Heart left ventricle (tissue), 16 donors: ENCODE measurements at regions of chr5 and their contacts with region 1.

Region 1: DNA sequence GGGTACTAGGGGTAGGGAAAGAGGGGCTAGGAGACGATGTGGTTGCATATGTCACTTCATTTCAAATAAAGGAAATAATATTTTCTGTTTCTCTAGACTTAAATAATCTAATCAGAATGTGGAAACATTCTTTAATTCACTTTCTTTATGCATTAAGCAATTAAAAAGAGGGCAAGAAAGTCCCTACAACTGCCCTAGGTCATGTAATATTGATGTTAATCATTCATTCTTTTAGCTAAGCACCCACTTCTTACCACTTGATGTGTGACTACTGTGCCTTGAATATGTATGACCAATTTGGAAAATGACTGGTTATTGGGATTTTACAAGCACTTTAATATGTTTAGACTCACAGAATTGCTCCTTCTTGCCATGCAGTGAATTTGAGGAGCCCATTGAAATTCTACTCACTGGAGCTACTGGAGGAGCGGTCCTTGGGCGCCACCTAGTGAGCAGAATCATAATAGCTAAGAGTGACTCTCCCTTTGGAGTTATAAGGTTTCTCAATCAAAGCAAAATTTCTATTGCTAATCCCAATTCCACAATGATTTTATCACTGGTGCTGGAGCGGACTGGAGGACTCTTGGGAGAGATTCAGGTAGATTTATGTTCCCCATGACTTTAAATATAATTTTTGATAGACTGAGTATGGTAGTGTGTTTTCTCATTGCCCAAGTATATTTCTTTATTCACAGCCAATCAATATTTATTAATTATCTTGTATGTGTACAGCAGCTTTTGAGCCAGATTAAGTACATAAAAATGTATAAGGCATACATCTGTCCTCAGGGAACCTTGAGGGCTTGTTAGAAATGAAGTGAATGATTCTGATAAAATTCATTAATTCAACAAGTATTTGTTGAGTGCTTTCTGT is 225.1 kb downstream of the ADGRV1 start:
- DNase-seq: peak in 4 of 5 donors; percentile 34 to 61 (median 54)
- ATAC-seq: peak in 3 of 4 donors; percentile 64 to 74 (median 65)
- H3K4me3 ChIP-seq: no peak overlapping the region
- H3K27ac ChIP-seq: no peak overlapping the region
- H3K4me1 ChIP-seq: no peaks in the 10 kb centered on the region
- H3K27me3 ChIP-seq: peaks cover 0 to 3% (median 0%) of the 10 kb centered on the region in 9 donors
- CTCF ChIP-seq: peak; percentile 81 to 97 (median 86)
- POLR2A ChIP-seq: no peak

Region 2: GRCh38 chr5:90434116-90434714 is 349.5 kb before region 1 on chr5:
- intact Hi-C with region 1: loop called in 3 of 10 experiments (anchors 2 to 10 kb)
- DNase-seq: peak in 2 of 5 donors; percentile 22 to 31
- ATAC-seq: peak in 1 of 4 donors; percentile 59
- H3K4me3 ChIP-seq: no peak overlapping the region
- H3K27ac ChIP-seq: no peak overlapping the region
- H3K4me1 ChIP-seq: peaks cover 0 to 4% (median 0%) of the 10 kb centered on the region in 12 donors
- H3K27me3 ChIP-seq: no peaks in the 10 kb centered on the region
- CTCF ChIP-seq: peak; percentile 34 to 65 (median 52)
- POLR2A ChIP-seq: no peak

Region 3: DNA sequence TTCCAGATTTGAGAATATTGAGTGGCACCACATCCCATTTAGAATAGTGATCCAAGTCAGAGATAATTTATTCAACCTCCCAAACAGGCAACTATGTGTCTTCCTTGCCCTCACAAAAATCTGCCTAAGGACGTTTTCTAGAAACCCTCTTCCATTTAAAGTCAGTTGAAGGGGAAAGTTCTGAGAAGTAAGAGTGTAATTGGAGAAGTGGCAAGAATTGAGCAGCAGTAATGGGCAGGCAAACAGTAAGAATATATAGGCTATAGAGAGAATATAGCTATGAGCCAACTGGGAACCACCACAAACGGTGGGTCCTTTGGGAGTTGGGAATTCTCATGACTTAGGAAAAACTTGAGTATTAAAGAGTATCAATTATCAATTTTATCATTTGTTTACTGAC is 343.1 kb before region 1 on chr5:
- intact Hi-C with region 1: loop called (anchors 1 to 10 kb)
- DNase-seq: no peak
- ATAC-seq: no peak
- H3K4me3 ChIP-seq: no peak overlapping the region
- H3K27ac ChIP-seq: no peak overlapping the region
- H3K4me1 ChIP-seq: peaks cover 0 to 6% (median 0%) of the 10 kb centered on the region in 12 donors
- H3K27me3 ChIP-seq: no peaks in the 10 kb centered on the region
- CTCF ChIP-seq: no peak
- POLR2A ChIP-seq: no peak

Region 4: GRCh38 chr5:90598293-90598692 is 185.4 kb before region 1 on chr5:
- intact Hi-C with region 1: no loop called
- DNase-seq: no peak
- ATAC-seq: no peak
- H3K4me3 ChIP-seq: no peak overlapping the region
- H3K27ac ChIP-seq: no peak overlapping the region
- H3K4me1 ChIP-seq: no peaks in the 10 kb centered on the region
- H3K27me3 ChIP-seq: peaks cover 0 to 9% (median 0%) of the 10 kb centered on the region in 9 donors
- CTCF ChIP-seq: no peak
- POLR2A ChIP-seq: no peak

Region 5: GRCh38 chr5:90709323-90710155 is 74.2 kb before region 1 on chr5:
- intact Hi-C with region 1: loop called in 3 of 10 experiments (anchors 5 to 10 kb)
- DNase-seq: peak in 2 of 5 donors; percentile 9 to 21
- ATAC-seq: peak in 2 of 4 donors; percentile 45 to 68
- H3K4me3 ChIP-seq: no peak overlapping the region
- H3K27ac ChIP-seq: no peak overlapping the region
- H3K4me1 ChIP-seq: no peaks in the 10 kb centered on the region
- H3K27me3 ChIP-seq: peaks cover 0 to 3% (median 0%) of the 10 kb centered on the region in 9 donors
- CTCF ChIP-seq: peak; percentile 27 to 67 (median 46)
- POLR2A ChIP-seq: no peak